PC-9 (cell line): ENCODE measurements at regions of chrX and their contacts with region 1.

Region 1: DNA sequence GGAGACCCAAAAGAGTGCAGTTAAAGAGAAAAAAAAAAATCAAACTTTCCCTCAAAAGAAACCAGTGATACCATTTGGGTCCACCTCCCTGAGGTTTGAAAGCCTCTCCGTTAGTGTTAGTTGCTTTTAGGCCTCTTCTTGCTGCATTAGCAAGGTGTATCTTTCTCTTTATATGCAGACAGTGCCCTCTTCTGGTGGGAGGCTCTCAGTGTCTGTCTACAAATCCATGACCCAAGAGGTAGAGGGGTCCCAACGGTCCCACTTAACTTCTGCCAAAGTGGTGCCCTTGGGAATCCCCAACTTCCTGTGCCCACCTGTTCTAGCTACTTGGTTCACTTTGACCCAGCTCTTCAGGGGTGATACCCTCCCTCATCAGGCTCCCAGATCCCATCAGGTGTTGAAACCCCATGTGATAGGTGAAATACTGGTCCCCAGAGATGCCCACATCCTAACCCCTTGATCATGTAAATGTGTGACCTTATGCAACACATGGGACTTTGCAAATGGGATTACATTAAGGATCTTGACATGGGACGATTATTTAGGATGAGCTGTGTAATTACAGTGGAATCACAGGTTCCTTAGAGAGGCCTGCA is 63.7 kb upstream of the CD99 start:
- DNase-seq: peak in 1 of 2 experiments; percentile 17
- H3K4me3 ChIP-seq: no peak overlapping the region
- H3K27ac ChIP-seq: no peak overlapping the region
- H3K4me1 ChIP-seq: no peaks in the 10 kb centered on the region
- H3K27me3 ChIP-seq: no peaks in the 10 kb centered on the region
- CTCF ChIP-seq: peak; percentile 77

Region 2: DNA sequence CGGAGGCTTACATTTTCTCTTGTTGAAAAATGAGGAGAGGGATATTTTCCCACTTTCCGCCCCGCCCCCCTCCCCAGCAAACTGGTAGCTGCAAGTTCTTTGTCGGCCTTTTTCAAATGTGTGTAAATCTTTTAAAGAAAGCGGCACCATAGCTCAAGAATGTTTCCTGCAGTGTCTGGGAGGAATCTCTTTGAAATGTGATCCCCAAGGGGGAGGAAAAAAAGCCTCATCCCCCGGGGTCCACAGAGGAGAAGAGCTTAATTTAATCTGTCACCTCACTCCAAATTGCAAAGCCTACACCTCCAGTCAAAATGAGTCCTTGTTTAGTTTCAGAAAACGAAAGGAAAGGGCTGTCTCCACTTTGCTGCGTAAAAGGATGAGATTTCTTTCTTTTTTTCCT is 977.7 kb before region 1 on chrX:
- CTCF ChIA-PET with region 1: no interaction called
- POLR2A ChIA-PET with region 1: no interaction called
- intact Hi-C with region 1: loop called (anchors 5 kb)
- DNase-seq: no peak
- H3K4me3 ChIP-seq: no peak overlapping the region
- H3K27ac ChIP-seq: no peak overlapping the region
- H3K4me1 ChIP-seq: no peaks in the 10 kb centered on the region
- H3K27me3 ChIP-seq: peaks cover 9% of the 10 kb centered on the region; the same call in 1 of the 2 replicates
- CTCF ChIP-seq: no peak